CD8-positive, alpha-beta T cell (primary cell): ENCODE measurements at regions of chr22 and their contacts with region 1.

Region 1: DNA sequence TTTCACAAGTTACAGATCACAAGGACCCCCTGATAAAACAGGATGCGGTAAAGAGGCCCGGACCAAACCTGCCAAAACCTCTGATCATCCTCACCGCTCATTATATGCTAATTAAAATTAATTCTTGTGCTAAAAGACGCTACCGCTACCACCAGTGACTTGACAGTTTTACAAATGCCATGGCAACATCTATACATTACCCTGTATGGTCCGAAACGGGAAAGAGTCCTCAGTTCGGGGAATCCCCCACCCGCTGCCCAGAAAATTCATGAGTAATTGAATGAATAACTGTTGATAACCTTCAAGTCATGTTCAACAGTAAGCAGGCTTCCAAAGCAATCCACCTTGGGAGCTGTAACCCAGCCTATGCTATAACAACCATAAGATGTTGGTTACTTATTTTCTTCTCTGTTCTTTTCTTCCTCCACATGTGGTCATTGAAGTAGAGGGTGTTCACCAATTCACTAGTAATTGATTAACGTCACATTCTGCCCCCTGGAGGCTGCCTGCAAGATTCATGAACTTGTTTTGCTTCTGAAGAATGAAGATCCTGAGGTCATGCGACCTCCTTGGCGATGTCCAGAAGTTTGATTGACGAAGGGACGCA is 20.6 kb downstream of the APOBEC3H start:
- DNase-seq: peak; percentile 49 to 93 (median 74)
- ATAC-seq: peak; percentile 51
- H3K4me3 ChIP-seq: peak overlapping the region in 1 of 2 experiments; percentile 15
- H3K4me3 Mint-ChIP-seq: peak overlapping the region; percentile 45
- H3K27ac ChIP-seq: peak overlapping the region; percentile 54 to 93
- H3K27ac Mint-ChIP-seq: peak overlapping the region; percentile 84
- H3K4me1 ChIP-seq: peaks cover 14% of the 10 kb centered on the region
- H3K4me1 Mint-ChIP-seq: peaks cover 38% of the 10 kb centered on the region
- H3K27me3 ChIP-seq: no peaks in the 10 kb centered on the region
- H3K27me3 Mint-ChIP-seq: no peaks in the 10 kb centered on the region
- CTCF ChIP-seq: peak; percentile 54

Region 2: GRCh38 chr22:38864361-38865191 is 253.1 kb before region 1 on chr22:
- CTCF ChIA-PET with region 1: interaction called, 10 read pairs
- POLR2A ChIA-PET with region 1: no interaction called
- intact Hi-C with region 1: loop called in 1 of 2 experiments (anchors 1 kb)
- DNase-seq: no peak
- ATAC-seq: no peak
- H3K4me3 ChIP-seq: no peak overlapping the region
- H3K4me3 Mint-ChIP-seq: no peak overlapping the region
- H3K27ac ChIP-seq: no peak overlapping the region
- H3K27ac Mint-ChIP-seq: peak overlapping the region; percentile 15
- H3K4me1 ChIP-seq: peaks cover 9% of the 10 kb centered on the region
- H3K4me1 Mint-ChIP-seq: peaks cover 15% of the 10 kb centered on the region
- H3K27me3 ChIP-seq: no peaks in the 10 kb centered on the region
- H3K27me3 Mint-ChIP-seq: no peaks in the 10 kb centered on the region
- CTCF ChIP-seq: no peak

Region 3: GRCh38 chr22:38900677-38901076 is 217.0 kb before region 1 on chr22:
- CTCF ChIA-PET with region 1: no interaction called
- POLR2A ChIA-PET with region 1: no interaction called
- intact Hi-C with region 1: no loop called
- DNase-seq: no peak
- ATAC-seq: no peak
- H3K4me3 ChIP-seq: no peak overlapping the region
- H3K4me3 Mint-ChIP-seq: no peak overlapping the region
- H3K27ac ChIP-seq: no peak overlapping the region
- H3K27ac Mint-ChIP-seq: no peak overlapping the region
- H3K4me1 ChIP-seq: peaks cover 12% of the 10 kb centered on the region
- H3K4me1 Mint-ChIP-seq: peaks cover 12% of the 10 kb centered on the region
- H3K27me3 ChIP-seq: no peaks in the 10 kb centered on the region
- H3K27me3 Mint-ChIP-seq: peaks cover 2% of the 10 kb centered on the region
- CTCF ChIP-seq: no peak

Region 4: GRCh38 chr22:38996105-38996504 is 121.6 kb before region 1 on chr22:
- CTCF ChIA-PET with region 1: no interaction called
- POLR2A ChIA-PET with region 1: no interaction called
- intact Hi-C with region 1: no loop called
- DNase-seq: no peak
- ATAC-seq: no peak
- H3K4me3 ChIP-seq: no peak overlapping the region
- H3K4me3 Mint-ChIP-seq: no peak overlapping the region
- H3K27ac ChIP-seq: no peak overlapping the region
- H3K27ac Mint-ChIP-seq: no peak overlapping the region
- H3K4me1 ChIP-seq: no peaks in the 10 kb centered on the region
- H3K4me1 Mint-ChIP-seq: peaks cover 3% of the 10 kb centered on the region
- H3K27me3 ChIP-seq: no peaks in the 10 kb centered on the region
- H3K27me3 Mint-ChIP-seq: peaks cover 10% of the 10 kb centered on the region
- CTCF ChIP-seq: no peak

Region 5: DNA sequence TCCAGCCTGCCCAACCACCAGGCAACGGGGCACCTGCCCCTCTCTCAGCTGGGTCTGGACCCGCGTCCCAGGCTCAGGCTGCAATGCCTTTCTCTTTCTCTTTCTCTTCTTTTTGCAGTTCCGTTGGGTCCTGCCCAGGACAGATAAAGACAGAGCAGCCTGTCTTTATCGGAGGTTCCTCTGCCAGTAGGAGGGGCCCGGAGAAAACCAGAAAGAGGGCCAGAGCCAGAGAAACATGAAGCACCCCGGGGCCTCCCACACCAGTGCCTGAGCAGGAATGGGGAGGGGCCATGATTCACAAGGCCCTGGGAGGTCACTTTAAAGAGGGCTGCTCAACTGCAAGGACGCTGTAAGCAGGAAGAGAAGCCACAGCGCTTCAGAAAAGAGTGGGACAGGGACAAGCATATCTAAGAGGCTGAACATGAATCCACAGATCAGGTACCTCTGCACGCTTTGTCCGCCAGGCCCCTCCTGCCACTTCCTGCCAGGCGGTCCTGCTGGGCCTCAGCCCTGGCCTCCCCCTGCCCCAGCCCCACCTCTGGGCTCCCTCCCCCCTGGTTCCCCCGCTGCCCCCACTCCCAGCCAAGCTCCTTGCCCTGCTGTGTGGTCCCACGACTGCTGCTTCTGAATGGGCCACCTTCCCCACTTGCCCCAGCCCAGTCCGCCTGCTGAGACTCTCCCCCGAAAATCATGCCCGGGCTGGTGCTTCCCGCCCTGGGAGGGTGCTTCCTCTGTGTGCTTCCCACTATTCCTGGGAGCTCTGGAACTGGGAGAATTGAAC is 103.6 kb before region 1 on chr22 and contains the start of gene APOBEC3C:
- CTCF ChIA-PET with region 1: interaction called, 63 read pairs
- POLR2A ChIA-PET with region 1: no interaction called
- intact Hi-C with region 1: loop called in 1 of 2 experiments (anchors 2 kb)
- DNase-seq: peak; percentile 35 to 89 (median 78)
- ATAC-seq: peak; percentile 89
- H3K4me3 ChIP-seq: peak within 1 kb of the TSS; percentile 47 to 62
- H3K4me3 Mint-ChIP-seq: peak within 1 kb of the TSS; percentile 88
- H3K27ac ChIP-seq: peak within 1 kb of the TSS; percentile 33 to 83
- H3K27ac Mint-ChIP-seq: peak within 1 kb of the TSS; percentile 91
- H3K4me1 ChIP-seq: peaks cover 18% of the 10 kb centered on the region
- H3K4me1 Mint-ChIP-seq: peaks cover 36% of the 10 kb centered on the region
- H3K27me3 ChIP-seq: no peaks in the 10 kb centered on the region
- H3K27me3 Mint-ChIP-seq: no peaks in the 10 kb centered on the region
- CTCF ChIP-seq: no peak
- total RNA-seq, gene APOBEC3C: 14.1 to 15.8 TPM

Region 6: GRCh38 chr22:39080052-39080762 is 37.5 kb before region 1 on chr22:
- CTCF ChIA-PET with region 1: interaction called, 7 read pairs
- POLR2A ChIA-PET with region 1: no interaction called
- intact Hi-C with region 1: loop called (anchors 5 kb)
- DNase-seq: peak in 5 of 9 experiments; percentile 40 to 85 (median 69)
- ATAC-seq: peak; percentile 17
- H3K4me3 ChIP-seq: peak overlapping the region in 1 of 2 experiments; percentile 83
- H3K4me3 Mint-ChIP-seq: peak overlapping the region; percentile 59
- H3K27ac ChIP-seq: peak overlapping the region in 1 of 2 experiments; percentile 90
- H3K27ac Mint-ChIP-seq: peak overlapping the region; percentile 88
- H3K4me1 ChIP-seq: peaks cover 51% of the 10 kb centered on the region
- H3K4me1 Mint-ChIP-seq: peaks cover 54% of the 10 kb centered on the region
- H3K27me3 ChIP-seq: no peaks in the 10 kb centered on the region
- H3K27me3 Mint-ChIP-seq: no peaks in the 10 kb centered on the region
- CTCF ChIP-seq: no peak

Region 7: DNA sequence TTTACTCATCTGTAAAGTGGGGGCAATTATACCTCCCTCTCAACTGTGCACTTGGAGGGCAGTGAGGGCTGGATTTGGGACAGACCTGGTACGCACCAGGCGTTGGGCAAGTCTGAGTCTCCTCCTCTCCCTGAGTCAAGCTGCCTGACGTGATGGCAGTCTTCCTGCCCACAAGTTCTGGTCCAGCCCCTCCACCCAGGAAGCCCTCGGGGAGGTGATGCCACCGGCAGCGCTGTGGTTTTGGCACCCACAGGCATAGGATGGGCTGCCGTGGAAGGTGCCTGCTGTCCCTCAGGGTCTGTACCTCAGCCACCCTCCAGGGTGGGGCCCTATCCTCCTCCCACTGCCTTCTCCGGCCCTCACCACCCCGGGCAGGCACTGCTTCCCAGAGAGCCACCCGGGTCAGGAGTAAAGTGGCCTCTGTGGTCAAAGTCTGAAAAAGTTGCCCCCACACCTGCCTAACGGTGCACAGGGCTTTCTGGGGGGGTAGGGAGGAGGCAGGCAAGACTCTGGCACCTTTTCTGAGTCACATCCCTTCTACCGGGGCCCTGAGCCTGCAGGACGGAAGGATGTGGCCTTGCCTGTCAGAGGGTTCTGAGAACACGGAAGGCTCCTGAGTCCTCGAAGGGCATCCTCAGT is 27.1 kb before region 1 on chr22:
- CTCF ChIA-PET with region 1: interaction called, 3 read pairs
- POLR2A ChIA-PET with region 1: interaction called, 3 read pairs
- intact Hi-C with region 1: loop called (anchors 1 kb)
- DNase-seq: peak; percentile 74 to 96 (median 87)
- ATAC-seq: peak; percentile 72
- H3K4me3 ChIP-seq: peak overlapping the region; percentile 26 to 42
- H3K4me3 Mint-ChIP-seq: peak overlapping the region; percentile 69
- H3K27ac ChIP-seq: peak overlapping the region; percentile 68 to 95
- H3K27ac Mint-ChIP-seq: peak overlapping the region; percentile 92
- H3K4me1 ChIP-seq: peaks cover 69% of the 10 kb centered on the region
- H3K4me1 Mint-ChIP-seq: peaks cover 77% of the 10 kb centered on the region
- H3K27me3 ChIP-seq: no peaks in the 10 kb centered on the region
- H3K27me3 Mint-ChIP-seq: no peaks in the 10 kb centered on the region
- CTCF ChIP-seq: no peak

Region 8: GRCh38 chr22:39097098-39098020 is 20.3 kb before region 1 on chr22 and contains the start of gene APOBEC3H:
- CTCF ChIA-PET with region 1: interaction called, 4 read pairs
- POLR2A ChIA-PET with region 1: interaction called, 3 read pairs
- intact Hi-C with region 1: loop called in 1 of 2 experiments (anchors 2 kb)
- DNase-seq: peak in 4 of 9 experiments; percentile 42 to 82 (median 64)
- ATAC-seq: peak; percentile 13
- H3K4me3 ChIP-seq: peak within 1 kb of the TSS in 1 of 2 experiments; percentile 19
- H3K4me3 Mint-ChIP-seq: peak within 1 kb of the TSS; percentile 26
- H3K27ac ChIP-seq: peak within 1 kb of the TSS; percentile 21 to 80
- H3K27ac Mint-ChIP-seq: peak within 1 kb of the TSS; percentile 90
- H3K4me1 ChIP-seq: peaks cover 67% of the 10 kb centered on the region
- H3K4me1 Mint-ChIP-seq: peaks cover 65% of the 10 kb centered on the region
- H3K27me3 ChIP-seq: no peaks in the 10 kb centered on the region
- H3K27me3 Mint-ChIP-seq: no peaks in the 10 kb centered on the region
- CTCF ChIP-seq: no peak
- total RNA-seq, gene APOBEC3H: 1.6 TPM